Naive thymus-derived CD8-positive, alpha-beta T cell (primary cell): ENCODE measurements at regions of chr10 and their contacts with region 1.

Region 1: DNA sequence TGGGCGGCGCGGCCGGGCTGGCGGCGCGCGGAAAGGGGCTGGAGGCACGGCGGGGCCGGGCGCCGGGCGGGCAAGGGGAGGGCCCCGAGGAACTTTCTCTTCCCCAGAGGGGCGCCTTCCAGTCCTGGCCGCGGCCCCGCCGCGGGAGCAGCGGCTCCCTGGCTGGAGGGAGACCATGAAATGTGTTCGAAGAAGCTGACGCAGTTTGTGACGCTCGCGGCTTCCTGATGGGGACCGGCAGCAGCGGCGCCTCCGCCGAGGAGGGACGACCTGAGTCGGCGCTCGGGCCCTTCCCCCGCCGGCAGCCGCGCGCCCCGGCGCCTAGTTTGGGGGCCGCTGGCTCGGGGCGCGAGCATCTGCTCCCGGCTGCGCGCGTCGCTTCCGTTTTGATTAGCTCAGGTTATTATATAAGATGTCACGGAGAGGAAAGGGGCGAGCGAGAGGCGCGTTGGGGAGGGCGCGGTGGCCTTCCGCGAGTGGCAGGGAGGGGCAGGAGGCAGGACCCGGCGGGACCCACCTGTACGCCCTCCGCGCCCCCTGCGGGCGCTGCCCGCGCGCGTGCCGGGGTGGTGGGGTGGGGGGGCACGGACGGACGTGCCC is 57.1 kb upstream of the PCGF5 start:
- DNase-seq: peak; percentile 78 to 95 (median 89)
- ATAC-seq: peak; percentile 66 to 74
- H3K4me3 Mint-ChIP-seq: peak overlapping the region; percentile 85 to 99 (median 91)
- H3K27ac Mint-ChIP-seq: peak overlapping the region; percentile 92 to 100 (median 98)
- H3K4me1 Mint-ChIP-seq: peaks cover 36 to 74% (median 53%) of the 10 kb centered on the region in 4 donors
- H3K27me3 Mint-ChIP-seq: no peaks in the 10 kb centered on the region

Region 2: GRCh38 chr10:90592638-90593302 is 570.6 kb before region 1 on chr10:
- POLR2A ChIA-PET with region 1: no interaction called
- DNase-seq: no peak
- ATAC-seq: no peak
- H3K4me3 Mint-ChIP-seq: no peak overlapping the region
- H3K27ac Mint-ChIP-seq: peak overlapping the region in 1 of 10 donors; percentile 67
- H3K4me1 Mint-ChIP-seq: no peaks in the 10 kb centered on the region
- H3K27me3 Mint-ChIP-seq: peaks cover 4 to 17% (median 6%) of the 10 kb centered on the region in 5 donors

Region 3: GRCh38 chr10:91006001-91006751 is 157.2 kb before region 1 on chr10:
- POLR2A ChIA-PET with region 1: interaction called, 16 read pairs
- DNase-seq: peak; percentile 34 to 79 (median 62)
- ATAC-seq: peak; percentile 85 to 87
- H3K4me3 Mint-ChIP-seq: peak overlapping the region; percentile 40 to 81 (median 68)
- H3K27ac Mint-ChIP-seq: peak overlapping the region in 9 of 10 donors; percentile 52 to 86 (median 73)
- H3K4me1 Mint-ChIP-seq: peaks cover 14 to 30% (median 22%) of the 10 kb centered on the region in 4 donors
- H3K27me3 Mint-ChIP-seq: no peaks in the 10 kb centered on the region

Region 4: GRCh38 chr10:91034494-91035159 is 128.7 kb before region 1 on chr10:
- POLR2A ChIA-PET with region 1: interaction called, 10 read pairs
- DNase-seq: no peak
- ATAC-seq: no peak
- H3K4me3 Mint-ChIP-seq: peak overlapping the region in 9 of 10 donors; percentile 8 to 82 (median 68)
- H3K27ac Mint-ChIP-seq: peak overlapping the region; percentile 80 to 98 (median 89)
- H3K4me1 Mint-ChIP-seq: peaks cover 16 to 31% (median 26%) of the 10 kb centered on the region in 4 donors
- H3K27me3 Mint-ChIP-seq: no peaks in the 10 kb centered on the region

Region 5: DNA sequence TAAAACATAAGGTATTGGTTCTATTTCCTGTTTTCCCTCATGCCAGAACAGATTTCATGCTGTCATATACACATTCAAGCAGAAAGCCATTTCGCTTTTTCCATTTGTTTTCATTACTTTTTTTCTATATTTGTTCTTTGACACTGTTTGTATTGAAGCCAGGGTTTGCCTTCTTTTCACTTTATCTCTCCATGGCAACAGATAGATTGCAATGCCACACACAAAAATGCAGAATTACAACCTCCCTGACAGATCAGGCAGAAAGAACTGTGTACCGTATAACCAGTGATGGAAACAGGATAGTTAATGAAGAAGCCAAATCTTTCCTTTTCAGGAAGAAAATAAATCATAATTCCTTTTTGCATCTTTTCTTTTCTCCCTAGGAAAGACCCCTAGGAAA is 45.9 kb before region 1 on chr10:
- POLR2A ChIA-PET with region 1: no interaction called
- DNase-seq: no peak
- ATAC-seq: no peak
- H3K4me3 Mint-ChIP-seq: no peak overlapping the region
- H3K27ac Mint-ChIP-seq: peak overlapping the region in 1 of 10 donors; percentile 8
- H3K4me1 Mint-ChIP-seq: no peaks in the 10 kb centered on the region
- H3K27me3 Mint-ChIP-seq: no peaks in the 10 kb centered on the region

Region 6: DNA sequence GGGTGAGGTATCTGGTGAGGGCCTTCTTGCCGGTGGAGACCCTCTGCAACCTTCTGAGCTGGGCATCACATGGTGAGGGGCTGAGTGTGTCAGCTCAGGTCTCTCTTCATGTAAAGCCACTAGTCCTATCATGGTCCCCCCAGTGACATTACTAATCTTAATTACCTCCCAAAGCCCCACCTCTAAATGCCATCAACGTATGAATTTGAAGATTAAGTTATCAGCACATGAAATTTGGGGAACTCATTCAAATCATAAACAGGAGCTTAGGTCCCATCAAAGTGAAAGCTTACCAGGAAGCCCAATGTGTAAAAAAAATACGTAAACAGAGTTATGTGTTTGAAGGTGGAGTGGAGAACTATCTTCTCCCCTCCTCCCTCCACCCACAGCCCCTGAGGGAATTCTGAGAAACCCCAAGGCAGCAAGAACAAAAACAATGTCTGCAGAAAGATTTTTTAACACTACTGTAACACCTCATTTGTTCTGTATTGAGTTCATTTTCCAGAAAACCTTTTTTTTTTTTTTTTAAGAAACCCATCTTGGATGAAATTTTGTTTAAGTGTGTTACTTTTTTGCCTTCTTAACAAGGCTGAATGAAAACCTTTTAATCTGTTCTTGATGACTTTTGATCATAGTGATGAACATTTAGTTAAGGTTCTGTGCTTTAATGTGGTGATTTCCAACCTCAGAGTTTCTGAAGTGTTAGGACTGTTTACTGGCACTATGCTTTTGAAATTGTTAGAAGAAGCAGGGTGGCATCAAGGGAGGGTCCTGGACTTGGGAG is 38.0 kb after region 1 on chr10:
- POLR2A ChIA-PET with region 1: interaction called, 31 read pairs
- DNase-seq: peak in 8 of 10 donors; percentile 23 to 80 (median 36)
- ATAC-seq: peak; percentile 76 to 81
- H3K4me3 Mint-ChIP-seq: peak overlapping the region; percentile 48 to 83 (median 70)
- H3K27ac Mint-ChIP-seq: peak overlapping the region; percentile 68 to 95 (median 88)
- H3K4me1 Mint-ChIP-seq: peaks cover 58 to 89% (median 85%) of the 10 kb centered on the region in 4 donors
- H3K27me3 Mint-ChIP-seq: no peaks in the 10 kb centered on the region

Region 7: GRCh38 chr10:91220194-91220953 is 57.0 kb after region 1 on chr10 and contains the start of gene PCGF5:
- POLR2A ChIA-PET with region 1: interaction called, 36 read pairs
- DNase-seq: peak; percentile 84 to 95 (median 91)
- ATAC-seq: peak; percentile 94 to 96
- H3K4me3 Mint-ChIP-seq: peak within 1 kb of the TSS; percentile 82 to 95 (median 92)
- H3K27ac Mint-ChIP-seq: peak within 1 kb of the TSS; percentile 48 to 95 (median 92)
- H3K4me1 Mint-ChIP-seq: peaks cover 29 to 62% (median 50%) of the 10 kb centered on the region in 4 donors
- H3K27me3 Mint-ChIP-seq: no peaks in the 10 kb centered on the region
- polyA plus RNA-seq, gene PCGF5: 55.7 to 73.5 (median 60.8) TPM

Region 8: DNA sequence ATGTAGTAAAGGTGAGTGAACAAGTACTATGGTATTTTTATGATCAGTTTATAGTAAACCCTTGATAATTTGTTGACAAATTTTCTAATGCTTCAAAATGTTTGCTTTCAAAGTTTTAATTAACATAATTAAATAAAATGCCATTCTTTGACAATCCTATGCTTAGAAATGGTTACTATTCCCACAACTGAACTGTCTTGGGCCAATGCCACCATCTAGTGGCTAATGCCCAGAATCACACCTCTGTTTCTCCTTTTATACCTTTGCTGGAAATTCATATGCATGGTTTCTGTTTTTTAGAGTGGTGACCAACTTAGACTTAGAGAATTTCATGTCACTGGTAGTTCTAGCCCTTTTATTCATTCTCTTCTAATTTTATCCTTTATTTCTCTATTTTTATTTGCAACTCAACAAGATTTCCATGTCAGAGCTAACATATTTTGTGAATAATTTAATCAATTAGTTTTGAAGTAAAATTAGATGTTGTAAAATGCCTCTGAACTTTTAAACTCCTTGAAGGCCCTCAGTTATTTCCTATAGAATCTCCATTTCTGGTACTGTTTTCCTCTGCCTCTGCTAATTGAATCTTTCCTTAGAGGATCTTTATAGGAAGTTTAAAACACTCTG is 88.2 kb after region 1 on chr10:
- POLR2A ChIA-PET with region 1: interaction called, 24 read pairs
- DNase-seq: peak; percentile 14 to 76 (median 58)
- ATAC-seq: peak; percentile 70 to 80
- H3K4me3 Mint-ChIP-seq: no peak overlapping the region
- H3K27ac Mint-ChIP-seq: peak overlapping the region in 1 of 10 donors; percentile 39
- H3K4me1 Mint-ChIP-seq: peaks cover 6 to 9% (median 7%) of the 10 kb centered on the region in 4 donors
- H3K27me3 Mint-ChIP-seq: no peaks in the 10 kb centered on the region

Region 9: DNA sequence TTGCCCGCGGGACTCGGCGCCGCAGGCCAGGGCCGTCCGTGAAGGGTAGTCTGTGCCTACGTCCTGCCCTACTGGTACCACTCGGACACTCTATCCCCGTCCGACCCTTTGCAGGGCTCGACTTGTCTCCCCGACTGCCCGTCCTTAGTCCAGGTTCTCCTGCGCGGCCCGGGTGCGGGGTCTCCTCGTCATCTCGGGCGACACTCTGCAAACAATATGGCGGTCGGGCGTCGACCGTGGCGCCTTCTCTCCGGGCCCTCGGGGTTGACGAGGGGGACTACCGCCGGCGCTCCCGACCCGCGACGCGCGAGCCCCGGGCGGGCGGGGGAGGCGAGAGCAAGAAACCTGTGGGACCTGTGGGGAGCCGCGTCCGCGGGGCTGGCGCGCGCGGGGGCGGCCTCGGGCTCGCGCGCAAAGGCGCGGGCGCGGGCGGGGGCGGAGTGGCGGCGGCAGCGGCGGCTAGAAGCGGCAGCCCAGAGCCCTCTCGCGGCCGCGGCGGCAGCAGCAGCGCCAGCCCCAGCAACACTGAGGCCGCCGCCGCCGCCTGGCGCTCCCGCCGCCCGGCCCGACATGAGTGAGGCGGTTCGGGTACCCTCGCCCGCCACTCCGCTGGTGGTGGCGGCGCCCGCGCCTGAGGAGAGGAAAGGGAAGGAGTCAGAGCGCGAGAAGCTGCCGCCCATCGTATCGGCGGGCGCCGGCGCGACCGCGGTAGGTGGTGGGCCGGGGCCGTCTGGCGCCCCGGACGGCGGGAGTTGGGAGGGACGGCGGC is 246.7 kb after region 1 on chr10 and contains the start of gene HECTD2:
- POLR2A ChIA-PET with region 1: interaction called, 11 read pairs
- DNase-seq: peak; percentile 70 to 89 (median 81)
- ATAC-seq: peak; percentile 87 to 88
- H3K4me3 Mint-ChIP-seq: peak within 1 kb of the TSS; percentile 85 to 94 (median 91)
- H3K27ac Mint-ChIP-seq: peak within 1 kb of the TSS; percentile 76 to 97 (median 90)
- H3K4me1 Mint-ChIP-seq: peaks cover 3 to 14% (median 9%) of the 10 kb centered on the region in 4 donors
- H3K27me3 Mint-ChIP-seq: peaks cover 0 to 6% (median 0%) of the 10 kb centered on the region in 5 donors
- polyA plus RNA-seq, gene HECTD2: 0.35 to 0.62 (median 0.47) TPM